Adrenal gland (tissue), 19 donors: ENCODE measurements at regions of chr13 and their contacts with region 1.

Region 1: GRCh38 chr13:31236211-31236786 is 36.5 kb downstream of the B3GLCT start:
- DNase-seq: peak in 2 of 7 donors; percentile 16 to 36
- H3K4me3 ChIP-seq: no peak overlapping the region
- H3K27ac ChIP-seq: no peak overlapping the region
- H3K4me1 ChIP-seq: no peaks in the 10 kb centered on the region
- H3K27me3 ChIP-seq: no peaks in the 10 kb centered on the region
- CTCF ChIP-seq: peak; percentile 53 to 72 (median 58)
- POLR2A ChIP-seq: no peak

Region 2: GRCh38 chr13:31424117-31424729 is 187.9 kb after region 1 on chr13:
- intact Hi-C with region 1: loop called (anchors 5 to 10 kb)
- DNase-seq: peak; percentile 75 to 90 (median 84)
- H3K4me3 ChIP-seq: no peak overlapping the region
- H3K27ac ChIP-seq: no peak overlapping the region
- H3K4me1 ChIP-seq: peaks cover 0 to 3% of the 10 kb centered on the region in 2 donors
- H3K27me3 ChIP-seq: no peaks in the 10 kb centered on the region
- CTCF ChIP-seq: peak; percentile 70 to 87 (median 84)
- POLR2A ChIP-seq: no peak